Common myeloid progenitor, CD34-positive (primary cell): ENCODE measurements at regions of chr12 and their contacts with region 1.

Region 1: DNA sequence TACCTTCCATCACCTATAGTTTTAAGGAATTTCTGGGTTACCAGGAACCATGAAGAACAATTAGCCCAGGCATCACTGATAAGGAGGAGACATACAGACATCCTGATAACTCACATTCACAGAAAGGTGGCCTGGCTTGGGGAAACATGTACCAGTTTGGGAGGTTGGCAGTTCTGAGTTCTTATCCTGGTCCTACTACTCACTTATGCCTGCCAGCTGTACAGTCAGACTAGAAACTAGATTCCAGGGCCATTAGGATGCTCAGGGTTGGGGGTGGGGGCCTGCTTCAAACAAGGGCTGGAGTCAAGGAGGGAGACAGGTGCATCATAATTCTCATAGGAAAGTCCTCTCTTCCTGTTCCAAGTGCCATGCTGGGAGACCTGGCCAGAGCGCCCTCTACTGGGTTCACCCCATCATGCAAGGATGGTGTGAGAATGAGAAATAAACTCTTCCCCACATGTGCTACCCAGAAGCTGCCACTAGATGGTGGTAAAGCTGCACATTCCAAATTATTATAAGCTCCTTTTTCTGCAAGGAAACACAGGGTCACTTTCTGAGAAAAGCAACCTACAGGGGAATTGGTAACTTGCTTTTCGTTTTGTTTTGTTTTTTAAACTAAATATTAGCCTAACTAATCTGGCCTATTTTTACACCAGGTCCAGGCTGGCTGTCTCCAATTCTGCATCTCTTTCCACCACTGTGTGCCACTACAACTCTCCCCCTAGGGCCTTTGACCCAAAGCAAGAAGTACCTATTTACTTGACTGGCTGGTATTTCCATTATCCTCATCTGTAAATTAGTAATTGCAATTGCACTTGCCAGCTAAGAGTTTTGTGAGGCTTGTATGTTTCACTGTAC is 14.5 kb downstream of the OAS2 start:
- DNase-seq: peak; percentile 62 to 86 (median 79)
- H3K4me3 ChIP-seq: no peak overlapping the region
- H3K27ac ChIP-seq: no peak overlapping the region
- H3K4me1 ChIP-seq: peaks cover 0 to 11% (median 4%) of the 10 kb centered on the region in 4 experiments
- H3K27me3 ChIP-seq: no peaks in the 10 kb centered on the region

Region 2: GRCh38 chr12:112855375-112855774 is 137.4 kb before region 1 on chr12:
- CTCF ChIA-PET with region 1: no interaction called
- POLR2A ChIA-PET with region 1: no interaction called
- DNase-seq: no peak
- H3K4me3 ChIP-seq: no peak overlapping the region
- H3K27ac ChIP-seq: no peak overlapping the region
- H3K4me1 ChIP-seq: peaks cover 0 to 23% (median 9%) of the 10 kb centered on the region in 4 experiments
- H3K27me3 ChIP-seq: no peaks in the 10 kb centered on the region

Region 3: GRCh38 chr12:112978163-112979040 is 14.4 kb before region 1 on chr12 and contains the start of gene OAS2:
- CTCF ChIA-PET with region 1: interaction called, 20 read pairs
- POLR2A ChIA-PET with region 1: no interaction called
- DNase-seq: peak; percentile 91 to 98 (median 97)
- H3K4me3 ChIP-seq: peak within 1 kb of the TSS; percentile 49 to 89 (median 77)
- H3K27ac ChIP-seq: peak within 1 kb of the TSS; percentile 72 to 80
- H3K4me1 ChIP-seq: peaks cover 9 to 43% (median 29%) of the 10 kb centered on the region in 4 experiments
- H3K27me3 ChIP-seq: no peaks in the 10 kb centered on the region

Region 4: DNA sequence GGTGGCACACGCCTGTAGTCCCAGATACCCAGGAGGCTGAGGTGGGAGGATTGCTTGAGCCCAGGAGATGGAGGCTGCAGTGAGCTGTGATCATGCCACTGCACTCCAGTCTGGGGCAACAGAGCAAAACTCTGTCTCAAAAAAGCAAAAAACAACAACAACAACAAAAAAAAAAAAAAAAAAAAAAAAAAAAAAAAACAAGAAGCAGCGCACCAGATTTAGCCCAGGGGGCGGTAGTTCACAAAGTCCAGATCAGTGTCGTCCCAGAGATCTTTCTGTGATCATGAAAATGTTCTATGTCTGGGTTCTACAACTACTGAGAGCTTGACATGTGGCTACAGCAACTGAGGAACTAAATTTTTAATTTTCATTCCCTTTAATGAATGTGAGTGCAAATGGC is 13.0 kb after region 1 on chr12:
- CTCF ChIA-PET with region 1: interaction called, 20 read pairs
- POLR2A ChIA-PET with region 1: no interaction called
- DNase-seq: peak in 2 of 3 donors; percentile 24 to 32
- H3K4me3 ChIP-seq: peak overlapping the region in 1 of 7 experiments; percentile 1
- H3K27ac ChIP-seq: no peak overlapping the region
- H3K4me1 ChIP-seq: no peaks in the 10 kb centered on the region
- H3K27me3 ChIP-seq: no peaks in the 10 kb centered on the region

Region 5: DNA sequence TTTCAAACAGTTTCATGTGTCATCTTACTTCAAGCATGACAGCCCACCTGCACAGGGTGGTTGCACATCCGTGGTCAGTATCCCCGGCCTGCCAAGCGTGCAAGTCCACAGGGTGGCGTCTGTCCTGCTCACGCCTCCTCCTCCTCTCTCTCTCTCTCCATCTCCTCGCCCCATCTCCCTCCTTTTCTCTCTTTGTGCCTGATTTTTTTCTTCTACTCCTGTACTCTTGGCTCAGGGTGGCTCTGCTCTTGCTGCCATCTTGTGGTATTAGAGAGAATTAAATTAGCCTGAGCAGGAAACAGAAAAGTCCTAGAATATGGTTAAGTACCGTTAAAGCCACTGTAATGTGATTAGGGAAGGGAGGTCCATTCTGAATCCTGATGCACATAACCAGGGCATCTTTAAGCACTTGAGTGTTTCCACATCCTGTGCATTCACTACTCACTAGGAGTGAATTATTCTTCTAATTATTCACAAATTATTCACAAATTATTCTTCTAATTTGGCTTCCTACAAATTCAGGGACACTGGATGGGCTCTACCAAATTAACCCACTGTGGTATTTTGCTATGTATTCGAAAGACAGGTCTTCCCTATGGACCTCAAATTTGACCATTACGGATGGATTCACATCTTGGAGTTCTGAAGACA is 38.2 kb after region 1 on chr12:
- CTCF ChIA-PET with region 1: interaction called, 16 read pairs
- POLR2A ChIA-PET with region 1: no interaction called
- DNase-seq: peak; percentile 43 to 67 (median 58)
- H3K4me3 ChIP-seq: no peak overlapping the region
- H3K27ac ChIP-seq: no peak overlapping the region
- H3K4me1 ChIP-seq: no peaks in the 10 kb centered on the region
- H3K27me3 ChIP-seq: no peaks in the 10 kb centered on the region